CD4-positive, alpha-beta T cell (primary cell): ENCODE measurements at regions of chr3 and their contacts with region 1.

Region 1: DNA sequence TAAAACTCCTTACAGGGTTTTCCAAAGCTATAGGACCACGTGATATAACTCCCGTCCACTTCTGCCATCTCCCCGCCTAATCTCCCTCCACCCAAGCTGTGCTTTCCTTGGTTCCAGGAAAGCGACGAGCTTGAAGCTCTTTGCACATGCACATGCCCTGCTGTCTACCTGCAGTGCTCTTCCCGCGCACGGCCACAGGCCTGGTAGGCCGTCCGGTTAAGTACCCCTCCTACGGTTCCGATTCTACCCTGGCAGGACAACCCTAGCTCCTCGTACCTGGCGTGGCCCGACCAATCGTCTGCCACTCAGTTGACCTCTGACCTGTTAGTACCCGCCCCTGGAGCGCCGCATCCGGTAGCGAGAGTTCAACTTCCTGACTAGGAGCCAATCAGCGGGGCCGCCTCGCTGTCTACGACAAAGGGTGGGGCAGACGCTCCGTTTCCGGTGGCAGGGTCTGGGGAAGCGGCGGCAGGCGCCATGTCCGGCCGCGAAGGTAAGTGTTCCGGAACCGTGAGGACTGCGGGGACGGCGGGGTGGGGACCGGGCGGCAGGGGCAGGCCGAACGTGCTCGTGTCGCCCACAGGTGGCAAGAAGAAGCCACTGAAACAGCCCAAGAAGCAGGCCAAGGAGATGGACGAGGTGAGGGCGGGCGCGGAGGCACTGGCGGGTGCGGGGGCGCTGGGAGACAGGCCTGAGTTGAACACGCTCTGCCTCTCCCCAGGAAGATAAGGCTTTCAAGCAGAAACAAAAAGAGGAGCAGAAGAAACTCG is at the starts of genes CCDC51 and TMA7:
- DNase-seq: peak; percentile 95 to 99 (median 98)
- ATAC-seq: peak; percentile 91
- H3K4me3 ChIP-seq: peak within 1 kb of the TSS; percentile 57
- H3K4me3 Mint-ChIP-seq: peak within 1 kb of the TSS; percentile 96
- H3K27ac ChIP-seq: peak within 1 kb of the TSS; percentile 88 to 94
- H3K27ac Mint-ChIP-seq: no peak within 1 kb of the TSS
- H3K4me1 ChIP-seq: peaks cover 44% of the 10 kb centered on the region
- H3K4me1 Mint-ChIP-seq: peaks cover 52% of the 10 kb centered on the region
- H3K27me3 ChIP-seq: no peaks in the 10 kb centered on the region
- H3K27me3 Mint-ChIP-seq: no peaks in the 10 kb centered on the region
- CTCF ChIP-seq: no peak
- total RNA-seq, gene CCDC51: 5.5 to 5.8 TPM
- total RNA-seq, gene TMA7: 289 to 297 TPM

Region 2: DNA sequence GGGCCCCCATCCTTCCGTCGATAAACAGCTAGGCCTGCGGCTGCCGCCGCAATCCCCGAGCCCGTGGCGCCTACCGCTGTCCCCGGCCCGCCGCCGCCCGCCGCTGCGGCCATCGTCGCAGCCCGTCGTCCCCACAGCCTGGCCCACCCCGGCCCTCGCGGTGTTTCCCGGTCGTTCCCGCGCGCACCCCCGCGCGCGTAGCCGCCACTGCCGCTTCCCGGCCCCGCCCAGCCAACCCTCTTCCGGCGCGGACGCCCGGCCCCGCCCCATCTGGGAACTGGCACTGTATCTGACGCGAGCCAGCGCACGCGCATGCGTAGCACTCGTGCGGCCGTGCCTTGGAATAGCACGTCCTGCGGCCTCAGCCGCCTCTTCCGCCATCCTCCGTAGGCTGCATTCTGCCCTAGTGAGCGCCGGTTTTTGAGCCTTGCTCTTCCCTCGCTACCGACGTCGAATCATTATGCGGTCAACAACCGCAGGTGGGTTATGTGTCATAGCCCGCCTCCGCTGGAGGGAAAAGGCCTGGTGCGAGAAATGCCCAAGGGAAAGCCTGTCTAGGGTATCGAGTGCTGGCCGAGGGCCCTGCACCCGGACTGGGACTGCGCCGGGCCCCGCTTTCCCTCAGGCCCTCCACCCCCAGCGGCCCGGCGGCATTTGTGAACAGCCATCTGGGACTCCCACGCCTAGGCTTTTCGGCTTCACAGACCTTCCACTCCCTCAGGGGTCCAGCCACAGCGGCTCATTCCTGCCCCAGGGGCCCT is 658.1 kb before region 1 on chr3 and contains the start of gene SMARCC1:
- CTCF ChIA-PET with region 1: no interaction called
- POLR2A ChIA-PET with region 1: no interaction called
- intact Hi-C with region 1: loop called in 1 of 2 experiments (anchors 5 kb)
- DNase-seq: peak; percentile 94 to 99 (median 97)
- ATAC-seq: peak; percentile 89
- H3K4me3 ChIP-seq: peak within 1 kb of the TSS; percentile 84
- H3K4me3 Mint-ChIP-seq: peak within 1 kb of the TSS; percentile 95
- H3K27ac ChIP-seq: peak within 1 kb of the TSS; percentile 96 to 97
- H3K27ac Mint-ChIP-seq: peak within 1 kb of the TSS; percentile 99
- H3K4me1 ChIP-seq: peaks cover 44% of the 10 kb centered on the region
- H3K4me1 Mint-ChIP-seq: peaks cover 31% of the 10 kb centered on the region
- H3K27me3 ChIP-seq: no peaks in the 10 kb centered on the region
- H3K27me3 Mint-ChIP-seq: no peaks in the 10 kb centered on the region
- CTCF ChIP-seq: no peak
- total RNA-seq, gene SMARCC1: 74.2 to 76.2 TPM

Region 3: DNA sequence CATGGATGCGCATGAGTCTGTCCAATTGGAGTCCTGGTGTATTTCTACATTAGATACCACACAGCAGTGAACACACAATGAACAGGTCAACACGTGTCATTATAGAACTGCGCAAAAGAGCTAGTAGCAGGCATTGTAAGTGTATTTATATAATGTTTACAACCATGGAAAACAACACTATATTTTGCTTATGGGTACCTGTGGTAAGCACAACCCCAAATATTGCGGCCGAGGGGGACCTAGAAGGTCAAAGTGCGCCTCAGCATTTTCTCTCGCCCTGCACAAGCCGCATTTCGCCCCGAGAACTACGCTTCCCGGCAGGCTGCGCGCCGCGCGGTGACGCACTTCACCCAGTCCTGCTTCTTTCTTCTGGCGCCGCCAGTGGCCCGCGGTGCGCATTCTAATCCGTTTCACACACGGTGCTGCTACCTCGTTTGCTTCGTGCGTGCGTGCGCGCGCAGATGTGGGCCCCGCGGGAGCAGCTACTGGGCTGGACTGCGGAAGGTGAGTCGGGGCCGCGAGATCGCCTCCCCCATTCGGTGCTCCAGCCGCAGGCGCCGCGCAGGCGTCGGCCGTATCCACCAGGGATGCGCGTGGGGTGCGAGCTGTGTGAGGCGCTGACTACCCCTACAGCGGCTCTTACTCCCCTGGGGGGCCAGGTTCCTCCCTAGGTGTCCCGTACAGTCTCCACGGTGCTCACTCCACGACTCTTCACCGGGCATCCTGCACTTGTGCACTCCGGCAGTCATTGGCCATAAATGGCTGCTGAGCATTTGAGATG is 199.1 kb before region 1 on chr3 and contains the start of gene ZNF589:
- CTCF ChIA-PET with region 1: interaction called, 10 read pairs
- POLR2A ChIA-PET with region 1: interaction called, 8 read pairs
- intact Hi-C with region 1: no loop called
- DNase-seq: peak; percentile 89 to 98 (median 94)
- ATAC-seq: peak; percentile 98
- H3K4me3 ChIP-seq: peak within 1 kb of the TSS; percentile 93
- H3K4me3 Mint-ChIP-seq: peak within 1 kb of the TSS; percentile 93
- H3K27ac ChIP-seq: peak within 1 kb of the TSS; percentile 85
- H3K27ac Mint-ChIP-seq: peak within 1 kb of the TSS; percentile 92
- H3K4me1 ChIP-seq: peaks cover 33% of the 10 kb centered on the region
- H3K4me1 Mint-ChIP-seq: peaks cover 23% of the 10 kb centered on the region
- H3K27me3 ChIP-seq: no peaks in the 10 kb centered on the region
- H3K27me3 Mint-ChIP-seq: no peaks in the 10 kb centered on the region
- CTCF ChIP-seq: no peak
- total RNA-seq, gene ZNF589: 18.3 to 20.5 TPM

Region 4: GRCh38 chr3:48400824-48401433 is 39.1 kb before region 1 on chr3:
- CTCF ChIA-PET with region 1: interaction called, 118 read pairs
- POLR2A ChIA-PET with region 1: interaction called, 37 read pairs
- intact Hi-C with region 1: loop called (anchors 1 kb)
- DNase-seq: peak; percentile 45 to 88 (median 56)
- ATAC-seq: peak; percentile 82
- H3K4me3 ChIP-seq: no peak overlapping the region
- H3K4me3 Mint-ChIP-seq: no peak overlapping the region
- H3K27ac ChIP-seq: no peak overlapping the region
- H3K27ac Mint-ChIP-seq: no peak overlapping the region
- H3K4me1 ChIP-seq: no peaks in the 10 kb centered on the region
- H3K4me1 Mint-ChIP-seq: no peaks in the 10 kb centered on the region
- H3K27me3 ChIP-seq: no peaks in the 10 kb centered on the region
- H3K27me3 Mint-ChIP-seq: peaks cover 1% of the 10 kb centered on the region
- CTCF ChIP-seq: peak; percentile 93

Region 5: DNA sequence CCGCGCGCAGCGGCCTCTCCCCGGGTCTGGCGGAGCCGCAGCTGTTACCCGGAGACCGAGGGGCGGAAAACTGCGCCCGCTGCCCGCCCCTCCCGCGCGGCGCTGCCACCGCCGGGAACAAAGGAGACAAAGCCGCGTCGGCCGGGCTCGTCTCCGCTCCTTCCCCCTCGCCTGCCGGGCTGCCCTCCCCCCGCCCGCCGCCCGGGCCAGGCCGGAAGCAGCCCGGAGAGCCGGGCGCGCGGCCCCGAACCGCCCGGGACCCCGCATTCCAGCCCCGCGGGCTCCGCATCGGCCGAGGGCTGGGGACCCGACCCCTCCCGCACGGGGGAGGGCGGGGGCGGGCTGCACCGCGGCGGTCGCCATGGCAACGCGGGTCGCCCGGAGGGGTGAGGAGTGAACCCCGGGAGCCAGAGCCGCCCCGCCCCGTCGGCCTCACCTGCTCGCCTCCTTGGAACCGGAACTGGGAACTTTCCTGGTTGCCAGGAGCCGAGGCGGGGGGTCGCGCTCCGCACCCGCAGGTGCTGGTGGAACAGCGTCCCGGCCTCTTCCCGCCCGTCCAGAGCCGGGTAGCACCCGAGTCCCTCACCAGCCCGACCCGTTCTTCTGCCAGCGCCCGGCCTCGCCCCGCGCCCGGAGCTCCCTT is 10.6 kb before region 1 on chr3:
- CTCF ChIA-PET with region 1: no interaction called
- POLR2A ChIA-PET with region 1: interaction called, 19 read pairs
- intact Hi-C with region 1: no loop called
- DNase-seq: peak; percentile 25 to 85 (median 55)
- ATAC-seq: peak; percentile 68
- H3K4me3 ChIP-seq: peak overlapping the region; percentile 56
- H3K4me3 Mint-ChIP-seq: peak overlapping the region; percentile 87
- H3K27ac ChIP-seq: no peak overlapping the region
- H3K27ac Mint-ChIP-seq: peak overlapping the region; percentile 49
- H3K4me1 ChIP-seq: peaks cover 20% of the 10 kb centered on the region
- H3K4me1 Mint-ChIP-seq: peaks cover 15% of the 10 kb centered on the region
- H3K27me3 ChIP-seq: no peaks in the 10 kb centered on the region
- H3K27me3 Mint-ChIP-seq: no peaks in the 10 kb centered on the region
- CTCF ChIP-seq: no peak

Region 6: GRCh38 chr3:48478596-48479555 is 38.9 kb after region 1 on chr3:
- CTCF ChIA-PET with region 1: interaction called, 22 read pairs
- POLR2A ChIA-PET with region 1: interaction called, 55 read pairs
- intact Hi-C with region 1: loop called in 1 of 2 experiments (anchors 5 kb)
- DNase-seq: peak; percentile 38 to 87 (median 59)
- ATAC-seq: peak; percentile 85
- H3K4me3 ChIP-seq: peak overlapping the region; percentile 47
- H3K4me3 Mint-ChIP-seq: peak overlapping the region; percentile 89
- H3K27ac ChIP-seq: peak overlapping the region; percentile 67 to 75
- H3K27ac Mint-ChIP-seq: peak overlapping the region; percentile 95
- H3K4me1 ChIP-seq: peaks cover 61% of the 10 kb centered on the region
- H3K4me1 Mint-ChIP-seq: peaks cover 36% of the 10 kb centered on the region
- H3K27me3 ChIP-seq: no peaks in the 10 kb centered on the region
- H3K27me3 Mint-ChIP-seq: no peaks in the 10 kb centered on the region
- CTCF ChIP-seq: no peak

Region 7: GRCh38 chr3:48548729-48549705 is 109.0 kb after region 1 on chr3:
- CTCF ChIA-PET with region 1: interaction called, 23 read pairs
- POLR2A ChIA-PET with region 1: interaction called, 12 read pairs
- intact Hi-C with region 1: loop called (anchors 2 to 5 kb)
- DNase-seq: peak; percentile 72 to 90 (median 81)
- ATAC-seq: peak; percentile 99
- H3K4me3 ChIP-seq: no peak overlapping the region
- H3K4me3 Mint-ChIP-seq: no peak overlapping the region
- H3K27ac ChIP-seq: no peak overlapping the region
- H3K27ac Mint-ChIP-seq: no peak overlapping the region
- H3K4me1 ChIP-seq: peaks cover 17% of the 10 kb centered on the region
- H3K4me1 Mint-ChIP-seq: peaks cover 21% of the 10 kb centered on the region
- H3K27me3 ChIP-seq: no peaks in the 10 kb centered on the region
- H3K27me3 Mint-ChIP-seq: no peaks in the 10 kb centered on the region
- CTCF ChIP-seq: peak; percentile 82